ENCODE measurements at regions of chr3 and their contacts with region 1.

Region 1: GRCh38 chr3:57755668-57756527 is at the start of gene SLMAP:
- DNase-seq: peak; percentile 96
- H3K4me3 Mint-ChIP-seq: peak within 1 kb of the TSS; percentile 89
- H3K27ac Mint-ChIP-seq: peak within 1 kb of the TSS; percentile 82
- H3K4me1 Mint-ChIP-seq: peaks cover 18% of the 10 kb centered on the region
- H3K27me3 Mint-ChIP-seq: no peaks in the 10 kb centered on the region
- CTCF ChIP-seq: no peak
- total RNA-seq, gene SLMAP: 103 and 114 TPM in 2 replicates

Region 2: GRCh38 chr3:57391767-57392166 is 364.1 kb before region 1 on chr3:
- CTCF ChIA-PET with region 1: no interaction called
- intact Hi-C with region 1: no loop called
- DNase-seq: no peak
- H3K4me3 Mint-ChIP-seq: no peak overlapping the region
- H3K27ac Mint-ChIP-seq: no peak overlapping the region
- H3K4me1 Mint-ChIP-seq: no peaks in the 10 kb centered on the region
- H3K27me3 Mint-ChIP-seq: no peaks in the 10 kb centered on the region
- CTCF ChIP-seq: no peak

Region 3: GRCh38 chr3:57597122-57597923 is 158.6 kb before region 1 on chr3 and contains the start of gene ARF4:
- CTCF ChIA-PET with region 1: no interaction called
- intact Hi-C with region 1: loop called (anchors 10 kb)
- DNase-seq: peak; percentile 99
- H3K4me3 Mint-ChIP-seq: peak within 1 kb of the TSS; percentile 87
- H3K27ac Mint-ChIP-seq: peak within 1 kb of the TSS; percentile 86
- H3K4me1 Mint-ChIP-seq: peaks cover 32% of the 10 kb centered on the region
- H3K27me3 Mint-ChIP-seq: no peaks in the 10 kb centered on the region
- CTCF ChIP-seq: no peak
- total RNA-seq, gene ARF4: 160 and 164 TPM in 2 replicates

Region 4: DNA sequence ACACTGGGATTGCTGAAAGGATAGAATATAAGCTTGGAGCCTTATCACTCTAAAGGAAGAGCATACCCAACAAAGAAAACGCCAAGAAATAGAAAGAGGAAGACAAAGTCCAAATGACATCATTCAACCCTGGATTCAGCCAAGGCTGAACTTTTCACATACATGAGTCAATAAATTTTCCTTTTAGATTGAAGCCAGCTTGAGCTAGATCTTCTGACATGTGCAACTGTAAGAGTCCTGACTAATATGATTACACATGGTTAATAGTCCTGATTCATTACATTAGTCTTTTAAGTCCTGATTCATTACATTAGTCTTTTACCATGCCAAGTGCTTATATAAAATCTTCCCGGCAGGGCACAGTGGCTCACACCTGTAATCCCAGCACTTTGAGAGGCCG is 49.4 kb before region 1 on chr3:
- CTCF ChIA-PET with region 1: interaction called, 4 read pairs
- intact Hi-C with region 1: loop called (anchors 1 kb)
- DNase-seq: peak; percentile 21
- H3K4me3 Mint-ChIP-seq: no peak overlapping the region
- H3K27ac Mint-ChIP-seq: peak overlapping the region; percentile 28
- H3K4me1 Mint-ChIP-seq: peaks cover 26% of the 10 kb centered on the region
- H3K27me3 Mint-ChIP-seq: no peaks in the 10 kb centered on the region
- CTCF ChIP-seq: no peak

Region 5: GRCh38 chr3:57826245-57826951 is 70.5 kb after region 1 on chr3:
- CTCF ChIA-PET with region 1: interaction called, 3 read pairs
- intact Hi-C with region 1: loop called (anchors 5 kb)
- DNase-seq: no peak
- H3K4me3 Mint-ChIP-seq: no peak overlapping the region
- H3K27ac Mint-ChIP-seq: peak overlapping the region; percentile 8
- H3K4me1 Mint-ChIP-seq: peaks cover 44% of the 10 kb centered on the region
- H3K27me3 Mint-ChIP-seq: no peaks in the 10 kb centered on the region
- CTCF ChIP-seq: no peak

Region 6: DNA sequence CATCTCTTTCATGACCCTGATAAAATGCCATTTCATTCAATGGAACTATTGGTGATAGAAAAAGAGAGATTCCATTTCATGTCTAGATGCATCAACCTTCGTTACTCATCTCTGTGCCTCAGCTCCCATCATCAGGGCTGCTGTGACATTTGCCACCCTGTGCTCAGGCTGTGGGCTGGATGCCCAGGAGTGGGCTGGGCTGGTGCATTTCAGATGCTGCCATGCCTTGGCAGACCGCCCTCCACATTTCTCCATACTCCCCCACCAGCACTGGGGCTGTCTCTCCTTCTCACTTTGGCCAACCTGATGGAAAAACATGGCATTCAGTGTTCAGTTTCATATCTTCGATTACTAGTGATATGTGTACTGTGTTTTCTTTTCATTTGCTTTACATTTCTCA is 395.7 kb after region 1 on chr3:
- CTCF ChIA-PET with region 1: no interaction called
- intact Hi-C with region 1: no loop called
- DNase-seq: no peak
- H3K4me3 Mint-ChIP-seq: no peak overlapping the region
- H3K27ac Mint-ChIP-seq: no peak overlapping the region
- H3K4me1 Mint-ChIP-seq: no peaks in the 10 kb centered on the region
- H3K27me3 Mint-ChIP-seq: no peaks in the 10 kb centered on the region
- CTCF ChIP-seq: no peak

Measured in Calu3 (cell line).